ENCODE measurements at regions of chr18 and their contacts with region 1.

Region 1: GRCh38 chr18:40464032-40464431 is 1491.0 kb upstream of the PIK3C3 start:
- DNase-seq: no peak
- ATAC-seq: no peak
- H3K4me3 ChIP-seq: no peak overlapping the region
- H3K27ac ChIP-seq: no peak overlapping the region
- H3K4me1 ChIP-seq: no peaks in the 10 kb centered on the region
- H3K27me3 ChIP-seq: no peaks in the 10 kb centered on the region
- CTCF ChIP-seq: no peak
- POLR2A ChIP-seq: no peak
- RAD21 ChIP-seq: no peak

Region 2: GRCh38 chr18:40450751-40451150 is 13.3 kb before region 1 on chr18:
- CTCF ChIA-PET with region 1: no interaction called
- POLR2A ChIA-PET with region 1: interaction called, 22 read pairs
- dilution Hi-C with region 1: no loop called
- in situ Hi-C with region 1: no loop called
- intact Hi-C with region 1: no loop called
- DNase-seq: no peak
- ATAC-seq: no peak
- H3K4me3 ChIP-seq: no peak overlapping the region
- H3K27ac ChIP-seq: no peak overlapping the region
- H3K4me1 ChIP-seq: no peaks in the 10 kb centered on the region
- H3K27me3 ChIP-seq: no peaks in the 10 kb centered on the region
- CTCF ChIP-seq: no peak
- POLR2A ChIP-seq: no peak
- RAD21 ChIP-seq: no peak

Region 3: DNA sequence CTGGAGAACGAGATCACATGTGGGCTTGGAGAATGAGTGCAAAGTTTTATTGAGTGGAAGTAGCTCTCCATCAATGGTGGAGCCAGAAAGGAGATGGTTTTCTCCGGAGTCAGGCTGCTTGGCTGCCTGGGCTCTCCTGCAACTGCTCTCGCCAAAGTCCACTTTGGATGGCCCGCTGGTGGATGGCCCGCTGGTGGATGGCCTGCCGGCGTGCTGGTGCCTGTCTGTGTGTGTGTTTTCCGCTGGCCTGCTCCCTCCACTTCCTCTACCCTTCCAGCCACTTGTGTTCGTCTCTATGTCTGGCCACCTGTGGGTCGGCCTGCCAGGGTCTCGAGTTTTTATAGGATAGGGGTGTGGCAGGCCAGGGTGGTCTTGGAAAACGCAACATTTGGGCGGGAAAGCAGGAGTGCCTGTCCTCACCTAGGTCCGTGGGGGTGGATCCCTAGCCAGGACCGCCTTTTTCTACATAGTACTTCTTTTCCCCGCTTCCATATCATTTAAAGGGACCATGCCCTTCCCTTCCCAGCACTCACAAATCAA is 198.9 kb after region 1 on chr18:
- CTCF ChIA-PET with region 1: no interaction called
- POLR2A ChIA-PET with region 1: no interaction called
- dilution Hi-C with region 1: no loop called
- in situ Hi-C with region 1: no loop called
- intact Hi-C with region 1: no loop called
- DNase-seq: no peak
- ATAC-seq: no peak
- H3K4me3 ChIP-seq: no peak overlapping the region
- H3K27ac ChIP-seq: no peak overlapping the region
- H3K4me1 ChIP-seq: no peaks in the 10 kb centered on the region
- H3K27me3 ChIP-seq: no peaks in the 10 kb centered on the region
- CTCF ChIP-seq: no peak
- POLR2A ChIP-seq: no peak
- RAD21 ChIP-seq: no peak